ENCODE measurements at regions of chr3 and their contacts with region 1.

Region 1: DNA sequence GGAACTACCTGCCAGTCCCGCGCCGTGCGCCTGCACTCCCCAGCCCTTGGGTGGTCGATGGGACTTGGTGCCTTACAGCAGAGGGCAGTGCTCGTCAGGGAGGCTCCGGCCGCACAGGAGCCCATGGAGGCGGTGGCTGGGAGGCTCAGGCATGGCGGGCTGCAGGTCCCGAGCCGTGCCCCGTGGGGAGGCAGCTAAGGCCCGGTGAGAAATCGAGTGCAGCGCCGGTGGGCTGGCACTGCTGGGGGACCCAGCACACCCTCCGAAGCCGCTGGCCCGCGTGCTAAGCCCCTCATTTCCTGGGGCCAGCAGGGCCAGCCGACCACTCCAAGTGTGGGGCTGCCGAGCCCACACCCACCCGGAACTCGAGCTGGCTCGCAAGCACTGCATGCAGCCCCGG is 580.2 kb downstream of the ZIC1 start:
- DNase-seq: no peak
- H3K4me3 ChIP-seq: no peak overlapping the region
- H3K27ac ChIP-seq: no peak overlapping the region
- H3K4me1 ChIP-seq: no peaks in the 10 kb centered on the region
- H3K27me3 ChIP-seq: no peaks in the 10 kb centered on the region
- CTCF ChIP-seq: no peak
- POLR2A ChIP-seq: no peak

Region 2: DNA sequence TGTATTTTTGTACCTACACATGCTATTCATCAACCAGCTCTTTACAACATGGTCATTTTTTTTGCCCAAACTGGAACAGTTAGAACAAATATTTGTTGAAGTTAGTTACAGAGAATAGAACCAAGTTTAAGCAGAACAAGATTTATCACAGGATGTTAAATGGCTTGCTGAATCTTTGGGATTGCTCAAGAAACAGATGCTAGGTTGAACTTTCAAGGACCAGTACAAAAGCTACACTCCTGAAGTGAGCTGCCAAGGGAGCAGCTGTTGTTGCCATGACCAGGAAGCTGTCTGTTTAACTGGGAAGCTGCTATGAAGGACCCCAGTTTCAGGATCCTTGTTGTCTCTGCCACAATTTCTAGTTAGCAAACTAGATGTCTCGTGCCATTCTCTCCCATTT is 526.5 kb before region 1 on chr3:
- intact Hi-C with region 1: loop called (anchors 5 kb)
- DNase-seq: no peak
- H3K4me3 ChIP-seq: no peak overlapping the region
- H3K27ac ChIP-seq: no peak overlapping the region
- H3K4me1 ChIP-seq: no peaks in the 10 kb centered on the region
- H3K27me3 ChIP-seq: no peaks in the 10 kb centered on the region
- CTCF ChIP-seq: no peak
- POLR2A ChIP-seq: no peak

Measured in breast epithelium (tissue), 4 donors.